Activated naive CD8-positive, alpha-beta T cell treated with anti-CD3 and anti-CD28 coated beads, Interleukin-2, amount 10 ng/mL, durations not matched to agents 7 days and 5 days (primary cell): ENCODE measurements at regions of chr17 and their contacts with region 1.

Region 1: DNA sequence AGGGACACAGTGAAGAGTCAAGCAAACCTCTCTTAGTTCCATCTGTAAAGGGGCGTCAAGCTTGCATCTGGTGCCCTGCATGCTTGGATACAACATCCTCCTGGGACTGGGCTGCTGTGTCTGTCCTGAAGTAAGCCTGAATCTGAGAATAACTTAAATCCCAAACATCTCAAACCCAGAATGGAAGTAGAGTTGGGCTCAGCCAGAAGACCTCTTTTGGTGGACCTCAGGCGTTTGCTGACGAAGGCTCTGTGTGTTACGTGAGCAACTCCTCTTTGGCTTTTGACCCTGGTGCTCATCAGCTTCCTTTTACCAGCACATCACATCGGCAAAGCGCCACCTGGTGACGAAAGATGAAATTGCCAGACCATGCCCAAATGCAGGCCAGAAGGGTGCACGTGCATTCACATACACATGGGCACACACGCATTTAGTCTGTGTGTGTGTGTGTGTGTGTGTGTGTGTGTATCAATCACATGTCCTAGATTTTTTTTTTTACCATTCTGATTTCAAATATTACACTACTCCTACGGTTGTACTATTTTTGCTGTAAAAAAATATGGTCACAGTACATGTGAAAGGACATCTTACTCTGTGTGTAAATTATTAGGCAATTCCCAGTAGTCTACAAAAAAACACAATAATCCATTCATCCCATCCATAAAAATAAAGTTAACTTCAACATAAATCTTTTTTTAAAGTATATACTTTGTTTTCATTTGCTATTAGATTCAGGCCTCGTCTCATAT is 41.1 kb upstream of the FOXJ1 start:
- DNase-seq: peak; percentile 92
- ATAC-seq: peak; percentile 69
- H3K4me3 Mint-ChIP-seq: peak overlapping the region; percentile 56
- H3K27ac Mint-ChIP-seq: peak overlapping the region; percentile 94
- H3K4me1 Mint-ChIP-seq: peaks cover 50% of the 10 kb centered on the region
- H3K27me3 Mint-ChIP-seq: no peaks in the 10 kb centered on the region

Region 2: DNA sequence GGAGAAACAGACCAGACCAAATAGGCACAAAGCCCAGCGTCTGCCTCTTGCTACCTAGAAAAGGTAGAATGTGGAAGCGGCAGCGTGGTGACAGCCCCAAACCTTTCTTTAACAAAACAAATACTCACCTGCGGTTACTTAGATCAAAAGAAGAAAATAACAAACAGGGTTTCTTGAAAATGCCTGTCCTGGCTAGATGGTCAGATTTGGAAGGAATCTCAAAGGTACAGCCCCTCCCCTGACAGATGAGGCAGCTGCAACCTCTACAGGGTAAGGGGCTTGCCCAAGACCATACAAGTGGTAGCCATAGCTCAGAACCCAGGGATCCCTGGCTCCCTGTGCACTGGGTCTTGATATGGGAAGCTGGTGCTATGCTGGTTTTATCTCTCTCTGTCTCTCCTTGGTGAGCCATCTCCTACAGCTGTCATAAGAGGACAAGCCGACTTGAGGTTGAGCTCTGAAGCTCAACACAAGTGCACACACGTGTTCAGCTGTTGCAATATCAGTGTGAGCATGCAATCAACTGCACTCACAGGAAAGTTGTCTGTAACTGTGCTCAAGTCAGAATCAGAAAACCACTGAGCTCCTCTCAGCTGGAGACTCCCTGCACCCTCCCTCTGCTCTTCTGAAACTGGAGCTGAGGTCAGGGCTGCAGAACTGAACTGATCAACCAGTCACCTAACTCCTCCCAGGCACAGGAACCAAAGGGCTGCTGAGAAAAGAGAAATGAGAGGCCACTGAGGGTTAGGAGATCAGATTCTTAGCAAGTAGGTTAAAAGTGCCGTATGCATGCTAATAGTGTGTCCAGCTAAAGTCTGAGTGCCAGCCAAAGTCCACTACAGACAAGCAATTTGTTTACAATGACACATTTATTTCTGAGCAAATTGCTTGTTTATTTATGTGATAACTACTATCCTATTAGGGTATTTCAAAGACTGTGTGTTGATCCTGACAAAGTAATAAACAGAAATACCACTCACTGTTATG is 64.2 kb after region 1 on chr17:
- POLR2A ChIA-PET with region 1: interaction called, 1,184 read pairs
- DNase-seq: peak; percentile 60
- ATAC-seq: peak; percentile 98
- H3K4me3 Mint-ChIP-seq: peak overlapping the region; percentile 59
- H3K27ac Mint-ChIP-seq: peak overlapping the region; percentile 95
- H3K4me1 Mint-ChIP-seq: peaks cover 56% of the 10 kb centered on the region
- H3K27me3 Mint-ChIP-seq: no peaks in the 10 kb centered on the region

Region 3: GRCh38 chr17:76264755-76265596 is 82.8 kb after region 1 on chr17 and contains the start of gene UBALD2:
- POLR2A ChIA-PET with region 1: interaction called, 1,184 read pairs
- DNase-seq: peak; percentile 99
- ATAC-seq: peak; percentile 81
- H3K4me3 Mint-ChIP-seq: peak within 1 kb of the TSS; percentile 88
- H3K27ac Mint-ChIP-seq: peak within 1 kb of the TSS; percentile 96
- H3K4me1 Mint-ChIP-seq: peaks cover 51% of the 10 kb centered on the region
- H3K27me3 Mint-ChIP-seq: no peaks in the 10 kb centered on the region
- total RNA-seq, gene UBALD2: 344 to 375 TPM